ENCODE measurements at regions of chr10 and their contacts with region 1.

Region 1: GRCh38 chr10:74194545-74194944 is 43.5 kb downstream of the ADK start:
- DNase-seq: no peak
- H3K27ac ChIP-seq: no peak overlapping the region
- CTCF ChIP-seq: no peak

Region 2: DNA sequence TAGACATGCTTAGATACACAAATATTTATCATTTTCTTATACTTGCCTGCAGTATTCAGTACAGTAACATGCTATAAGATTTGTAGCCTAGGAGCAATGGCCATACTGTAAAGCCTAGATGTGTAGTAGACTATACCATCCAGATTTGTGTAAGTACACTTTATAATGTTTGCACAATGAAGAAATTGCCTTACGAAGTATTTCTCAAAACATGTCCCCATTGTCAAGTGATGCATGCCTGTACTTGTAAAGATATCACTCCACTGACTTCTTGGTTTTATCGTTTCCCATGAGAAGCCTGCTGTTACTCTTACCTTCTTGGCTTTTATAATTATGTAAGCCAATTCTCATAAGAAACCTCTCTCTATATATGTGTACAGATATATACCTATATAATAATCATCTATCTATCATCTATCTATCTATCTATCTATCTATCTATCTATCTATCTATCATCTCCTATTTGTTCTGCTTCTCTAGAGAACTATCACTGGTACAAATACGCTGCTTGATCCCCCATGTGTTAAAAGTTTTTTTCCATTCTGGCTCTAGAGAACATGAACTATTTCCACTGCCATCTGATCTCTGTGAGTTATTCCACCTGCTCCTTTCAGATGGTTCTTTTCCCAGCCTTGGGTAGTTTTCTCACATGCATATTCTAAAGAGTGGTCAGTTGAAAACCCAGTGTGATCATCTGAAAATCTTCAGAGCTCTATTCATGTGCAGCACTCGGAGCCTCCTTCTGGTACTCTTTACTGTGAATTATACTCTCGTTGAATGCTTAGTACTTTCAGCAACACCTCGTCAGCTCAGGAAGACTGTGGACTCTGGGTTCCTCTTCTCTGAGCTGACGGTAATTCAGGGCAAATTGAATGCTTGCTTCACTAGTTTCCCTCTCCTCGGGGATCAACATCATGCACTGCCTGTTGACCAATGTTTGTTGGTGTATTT is 211.2 kb before region 1 on chr10:
- CTCF ChIA-PET with region 1: no interaction called
- POLR2A ChIA-PET with region 1: no interaction called
- DNase-seq: no peak
- H3K27ac ChIP-seq: no peak overlapping the region
- CTCF ChIP-seq: no peak

Region 3: GRCh38 chr10:74011770-74012169 is 182.8 kb before region 1 on chr10:
- CTCF ChIA-PET with region 1: no interaction called
- POLR2A ChIA-PET with region 1: no interaction called
- DNase-seq: no peak
- H3K27ac ChIP-seq: no peak overlapping the region
- CTCF ChIP-seq: no peak

Region 4: GRCh38 chr10:74244097-74244685 is 49.6 kb after region 1 on chr10:
- CTCF ChIA-PET with region 1: no interaction called
- POLR2A ChIA-PET with region 1: interaction called, 15 read pairs
- DNase-seq: no peak
- H3K27ac ChIP-seq: no peak overlapping the region
- CTCF ChIP-seq: peak; percentile 54; the same call in 1 of the 2 replicates

Measured in RWPE1 (cell line).